AG04450 (cell line): ENCODE measurements at regions of chr22 and their contacts with region 1.

Region 1: GRCh38 chr22:21754523-21754922 is 18.9 kb upstream of the YPEL1 start:
- DNase-seq: no peak
- H3K4me3 ChIP-seq: no peak overlapping the region
- H3K27ac ChIP-seq: peak overlapping the region; percentile 21
- H3K27me3 ChIP-seq: no peaks in the 10 kb centered on the region
- CTCF ChIP-seq: no peak

Region 2: GRCh38 chr22:21741806-21742205 is 12.7 kb before region 1 on chr22:
- CTCF ChIA-PET with region 1: no interaction called
- POLR2A ChIA-PET with region 1: interaction called, 11 read pairs
- DNase-seq: no peak
- H3K4me3 ChIP-seq: no peak overlapping the region
- H3K27ac ChIP-seq: no peak overlapping the region
- H3K27me3 ChIP-seq: peaks cover 5% of the 10 kb centered on the region
- CTCF ChIP-seq: no peak

Region 3: DNA sequence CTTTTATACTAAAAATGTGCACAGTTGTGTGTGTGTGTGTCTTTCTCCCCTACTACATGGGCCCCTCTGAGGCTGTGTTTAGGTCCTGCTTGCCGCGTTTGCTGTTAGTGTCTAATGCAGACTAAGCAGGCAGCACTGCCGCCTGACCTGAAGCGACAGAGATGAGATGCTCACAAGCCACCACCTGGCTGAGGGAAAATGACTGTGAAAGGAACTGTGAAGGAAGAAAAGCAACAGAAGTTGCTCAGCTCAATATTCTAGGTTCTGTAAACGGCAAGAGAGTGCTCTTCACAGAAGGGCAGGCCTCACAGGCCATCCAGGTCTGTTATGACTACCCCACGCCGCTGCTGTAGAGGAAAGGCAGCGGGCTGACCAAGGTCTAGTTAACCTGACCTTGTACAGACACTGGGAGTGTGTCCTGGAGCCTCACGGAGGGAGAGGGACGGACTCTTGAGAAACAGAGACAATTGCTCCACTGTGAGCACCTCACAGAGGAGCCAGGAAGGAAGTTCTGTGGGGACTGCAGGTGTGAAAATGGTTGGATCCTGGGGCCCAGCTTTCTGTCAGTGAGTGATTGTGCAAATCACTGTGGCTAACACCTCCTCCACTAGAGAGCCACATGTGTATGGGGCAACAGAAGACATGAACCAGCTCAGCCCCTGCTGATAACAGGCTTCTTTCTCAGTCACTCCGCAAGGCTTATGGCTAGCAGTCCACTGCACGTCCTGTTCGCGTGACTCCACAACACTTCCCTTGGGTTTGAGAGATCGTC is 12.4 kb after region 1 on chr22:
- CTCF ChIA-PET with region 1: no interaction called
- POLR2A ChIA-PET with region 1: no interaction called
- DNase-seq: no peak
- H3K4me3 ChIP-seq: no peak overlapping the region
- H3K27ac ChIP-seq: no peak overlapping the region
- H3K27me3 ChIP-seq: no peaks in the 10 kb centered on the region
- CTCF ChIP-seq: no peak

Region 4: GRCh38 chr22:21778705-21779363 is 24.3 kb after region 1 on chr22:
- CTCF ChIA-PET with region 1: no interaction called
- POLR2A ChIA-PET with region 1: no interaction called
- DNase-seq: peak; percentile 59
- H3K4me3 ChIP-seq: no peak overlapping the region
- H3K27ac ChIP-seq: peak overlapping the region; percentile 65
- H3K27me3 ChIP-seq: no peaks in the 10 kb centered on the region
- CTCF ChIP-seq: no peak